ENCODE measurements at regions of chr14 and their contacts with region 1.

Region 1: DNA sequence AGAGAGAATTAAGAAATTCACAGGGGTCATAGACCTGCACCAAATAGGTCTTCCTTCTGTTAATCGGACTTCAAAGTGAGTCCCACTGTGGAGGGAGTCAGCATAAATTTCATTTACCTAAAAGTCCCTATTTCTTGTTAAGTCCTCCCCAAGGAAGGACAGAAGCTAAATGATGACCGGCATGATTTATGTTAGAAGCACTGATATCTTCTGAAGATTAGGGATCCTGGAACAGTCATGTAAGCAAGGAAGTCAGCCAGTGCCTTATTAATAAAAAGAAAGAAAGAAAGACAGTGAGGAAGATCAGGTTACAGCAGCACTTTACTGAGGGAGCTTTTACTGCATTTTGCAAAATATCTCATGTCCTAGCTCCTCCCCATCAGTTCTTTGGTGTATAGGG is 287.5 kb downstream of the FOXG1 start:
- DNase-seq: no peak
- ATAC-seq: no peak
- H3K4me3 ChIP-seq: no peak overlapping the region
- H3K27ac ChIP-seq: no peak overlapping the region
- H3K4me1 ChIP-seq: no peaks in the 10 kb centered on the region
- H3K27me3 ChIP-seq: no peaks in the 10 kb centered on the region
- CTCF ChIP-seq: no peak

Region 2: GRCh38 chr14:29126361-29126760 is 72.2 kb after region 1 on chr14:
- intact Hi-C with region 1: loop called (anchors 2 kb)
- DNase-seq: no peak
- ATAC-seq: no peak
- H3K4me3 ChIP-seq: no peak overlapping the region
- H3K27ac ChIP-seq: no peak overlapping the region
- H3K4me1 ChIP-seq: no peaks in the 10 kb centered on the region
- H3K27me3 ChIP-seq: no peaks in the 10 kb centered on the region
- CTCF ChIP-seq: no peak

Region 3: GRCh38 chr14:29310757-29311156 is 256.6 kb after region 1 on chr14:
- intact Hi-C with region 1: no loop called
- DNase-seq: no peak
- ATAC-seq: no peak
- H3K4me3 ChIP-seq: no peak overlapping the region
- H3K27ac ChIP-seq: no peak overlapping the region
- H3K4me1 ChIP-seq: no peaks in the 10 kb centered on the region
- H3K27me3 ChIP-seq: no peaks in the 10 kb centered on the region
- CTCF ChIP-seq: no peak